ENCODE measurements at regions of chr9 and their contacts with region 1.

Region 1: GRCh38 chr9:6272229-6272598 is 56.0 kb upstream of the TPD52L3 start:
- DNase-seq: no peak
- ATAC-seq: peak; percentile 99

Region 2: GRCh38 chr9:6226696-6227095 is 45.5 kb before region 1 on chr9:
- intact Hi-C with region 1: loop called (anchors 10 kb)
- DNase-seq: no peak
- ATAC-seq: peak; percentile 27

Region 3: GRCh38 chr9:6616951-6617602 is 344.9 kb after region 1 on chr9:
- intact Hi-C with region 1: no loop called
- DNase-seq: no peak
- ATAC-seq: no peak